ENCODE measurements at regions of chr19 and their contacts with region 1.

Region 1: DNA sequence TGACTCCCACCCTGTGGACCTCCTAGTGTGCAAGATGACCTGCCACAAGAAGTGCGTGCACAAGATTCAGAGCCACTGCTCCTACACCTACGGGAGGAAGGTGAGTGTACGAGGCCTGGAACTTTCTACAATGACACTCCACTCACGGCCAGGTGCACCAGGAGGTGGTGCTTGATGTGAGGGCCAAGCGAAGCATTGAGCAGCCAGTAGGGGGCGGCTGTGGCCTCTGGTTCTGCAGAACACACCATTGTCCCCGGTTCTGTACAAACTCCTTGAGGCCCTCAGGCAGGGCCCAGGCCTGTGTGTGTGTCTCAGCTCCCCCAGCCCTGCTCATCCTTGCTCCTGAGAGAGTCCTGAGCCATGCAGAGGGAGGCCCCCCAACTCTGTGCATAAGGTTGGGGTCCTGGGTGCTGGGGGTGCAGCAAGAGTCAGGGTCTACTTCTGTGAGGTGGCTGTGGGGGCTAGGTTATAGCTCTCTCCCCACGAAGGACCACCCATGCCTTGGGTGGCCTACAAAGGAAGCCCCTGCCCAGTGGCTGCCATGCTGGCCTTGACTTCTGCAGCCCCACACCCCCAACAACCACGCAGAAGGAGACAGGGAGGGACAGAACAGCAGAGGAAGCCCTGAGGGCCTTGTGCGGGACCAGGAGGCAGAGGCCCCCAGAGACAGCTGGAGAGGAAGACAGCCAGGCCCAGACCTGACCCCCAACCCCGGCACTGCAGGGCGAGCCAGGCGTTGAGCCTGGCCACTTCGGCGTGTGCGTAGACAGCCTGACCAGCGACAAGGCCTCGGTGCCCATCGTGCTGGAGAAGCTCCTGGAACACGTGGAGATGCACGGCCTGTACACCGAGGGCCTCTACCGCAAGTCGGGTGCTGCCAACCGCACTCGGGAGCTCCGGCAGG is 9.7 kb upstream of the USE1 start:
- DNase-seq: peak in 1 of 2 donors; percentile 76
- ATAC-seq: peak in 3 of 4 donors; percentile 54 to 77 (median 75)
- H3K4me3 ChIP-seq: no peak overlapping the region
- H3K27ac ChIP-seq: no peak overlapping the region
- H3K4me1 ChIP-seq: no peaks in the 10 kb centered on the region
- H3K27me3 ChIP-seq: no peaks in the 10 kb centered on the region
- CTCF ChIP-seq: peak; percentile 56

Region 2: DNA sequence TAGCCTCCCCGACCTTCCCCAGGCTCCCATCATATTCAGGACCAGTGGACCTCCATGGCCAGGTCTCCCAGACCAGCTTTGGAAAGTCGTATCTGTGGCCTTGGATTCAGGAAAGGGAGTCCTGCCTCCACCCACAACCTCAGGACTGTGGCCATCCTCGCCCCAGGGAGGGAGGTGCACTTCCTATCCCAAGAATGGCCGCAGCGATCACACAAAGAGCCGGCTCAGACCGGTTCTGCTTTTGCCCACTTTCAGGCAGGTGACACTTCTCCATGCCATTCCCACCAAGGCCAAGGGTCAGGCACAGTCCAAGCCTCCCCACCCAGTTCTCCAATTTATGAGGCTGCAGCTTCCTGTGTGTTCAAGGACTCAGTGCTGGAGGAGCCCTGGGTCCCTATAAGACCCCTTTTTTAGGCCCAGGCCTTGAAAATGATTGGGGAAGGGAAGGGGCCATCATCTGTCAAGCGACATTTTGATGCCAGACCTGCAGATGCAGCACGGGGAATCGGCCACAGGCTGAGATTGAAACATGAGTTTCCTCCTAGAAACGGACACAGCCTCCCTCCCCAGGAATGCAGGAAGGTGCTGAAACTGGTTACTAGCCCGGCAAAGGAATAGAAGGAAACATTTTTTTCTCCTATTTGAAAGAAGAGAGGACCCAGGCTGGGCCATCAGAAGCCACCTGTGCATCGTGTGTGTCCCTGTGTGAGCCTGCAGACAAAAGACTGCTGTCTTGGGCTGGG is 55.9 kb before region 1 on chr19:
- intact Hi-C with region 1: loop called in 1 of 2 experiments (anchors 10 kb)
- DNase-seq: no peak
- ATAC-seq: no peak
- H3K4me3 ChIP-seq: no peak overlapping the region
- H3K27ac ChIP-seq: no peak overlapping the region
- H3K4me1 ChIP-seq: no peaks in the 10 kb centered on the region
- H3K27me3 ChIP-seq: no peaks in the 10 kb centered on the region
- CTCF ChIP-seq: no peak

Region 3: GRCh38 chr19:17282488-17283255 is 77.2 kb after region 1 on chr19:
- intact Hi-C with region 1: loop called (anchors 2 to 5 kb)
- DNase-seq: peak; percentile 83 to 91
- ATAC-seq: peak; percentile 89 to 98 (median 96)
- H3K4me3 ChIP-seq: peak overlapping the region; percentile 51
- H3K27ac ChIP-seq: no peak overlapping the region
- H3K4me1 ChIP-seq: peaks cover 4% of the 10 kb centered on the region
- H3K27me3 ChIP-seq: peaks cover 0 to 16% (median 7%) of the 10 kb centered on the region in 3 donors
- CTCF ChIP-seq: peak; percentile 91

Measured in psoas muscle (tissue), 8 donors.